ENCODE measurements at regions of chr1 and their contacts with region 1.

Region 1: GRCh38 chr1:8382051-8382505 is 64.2 kb downstream of the SLC45A1 start:
- DNase-seq: no peak
- ATAC-seq: no peak
- H3K4me3 ChIP-seq: no peak overlapping the region
- H3K27ac ChIP-seq: peak overlapping the region; percentile 90 to 95 (median 93)
- H3K4me1 ChIP-seq: peaks cover 98 to 99% of the 10 kb centered on the region in 2 donors
- H3K27me3 ChIP-seq: no peaks in the 10 kb centered on the region
- CTCF ChIP-seq: no peak
- POLR2A ChIP-seq: no peak

Region 2: GRCh38 chr1:8396786-8397406 is 14.8 kb after region 1 on chr1:
- in situ Hi-C with region 1: no loop called
- intact Hi-C with region 1: loop called (anchors 1 kb)
- DNase-seq: peak; percentile 87 to 88
- ATAC-seq: peak; percentile 92 to 94
- H3K4me3 ChIP-seq: peak overlapping the region in 3 of 4 donors; percentile 5 to 22 (median 7)
- H3K27ac ChIP-seq: peak overlapping the region; percentile 86 to 92 (median 88)
- H3K4me1 ChIP-seq: peaks cover 87 to 96% of the 10 kb centered on the region in 2 donors
- H3K27me3 ChIP-seq: no peaks in the 10 kb centered on the region
- CTCF ChIP-seq: no peak
- POLR2A ChIP-seq: peak in 1 of 2 donors; percentile 58

Region 3: GRCh38 chr1:8465013-8465412 is 82.9 kb after region 1 on chr1:
- in situ Hi-C with region 1: no loop called
- intact Hi-C with region 1: no loop called
- DNase-seq: no peak
- ATAC-seq: peak in 1 of 2 donors; percentile 63
- H3K4me3 ChIP-seq: no peak overlapping the region
- H3K27ac ChIP-seq: peak overlapping the region; percentile 9 to 83 (median 56)
- H3K4me1 ChIP-seq: peaks cover 27 to 41% of the 10 kb centered on the region in 2 donors
- H3K27me3 ChIP-seq: no peaks in the 10 kb centered on the region
- CTCF ChIP-seq: peak in 1 of 5 experiments; percentile 31
- POLR2A ChIP-seq: no peak

Measured in gastrocnemius medialis (tissue), 4 donors.